ENCODE measurements at regions of chr7 and their contacts with region 1.

Region 1: GRCh38 chr7:1664711-1665548 is 5.1 kb upstream of the ELFN1 start:
- DNase-seq: no peak
- H3K4me3 ChIP-seq: peak overlapping the region; percentile 57
- H3K27ac ChIP-seq: no peak overlapping the region
- H3K27me3 ChIP-seq: peaks cover 48% of the 10 kb centered on the region
- CTCF ChIP-seq: peak; percentile 71

Region 2: DNA sequence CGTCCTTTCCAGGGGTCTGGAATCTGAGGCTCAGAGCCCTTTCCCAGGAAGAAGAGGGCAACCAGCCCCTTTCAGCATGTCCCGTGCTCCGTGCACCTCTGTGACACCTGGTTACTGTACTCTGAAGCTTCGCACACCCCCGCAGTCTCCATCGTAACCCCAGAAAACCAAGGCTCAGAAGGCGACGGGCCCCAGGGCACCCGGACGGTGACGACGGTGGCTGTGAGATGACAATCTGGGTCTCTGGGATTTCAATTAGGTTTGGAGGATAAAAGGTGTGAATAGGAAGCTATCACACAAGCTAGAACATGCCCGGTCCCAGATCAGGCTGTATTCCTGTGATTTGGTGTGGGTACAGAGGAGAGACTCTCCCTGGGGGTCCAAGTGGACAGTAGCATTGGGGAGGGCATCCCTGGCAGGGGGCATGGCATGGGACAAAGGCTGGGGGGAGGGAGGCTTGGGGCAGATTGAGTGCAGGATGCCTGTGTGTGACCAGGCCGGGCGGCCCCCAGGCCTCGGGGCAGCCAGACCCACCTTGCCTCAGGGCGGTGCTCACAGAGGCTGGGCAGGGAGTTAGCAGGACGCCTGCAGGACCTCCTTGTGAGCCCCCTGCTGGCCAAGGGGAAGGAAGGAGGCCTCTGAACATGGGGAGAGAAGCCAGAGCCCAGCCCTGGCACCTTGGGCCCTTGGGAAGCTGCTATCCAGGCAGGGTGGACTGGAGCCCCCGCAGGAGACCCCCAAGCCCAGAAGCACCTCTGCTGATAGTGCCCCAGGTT is 71.7 kb before region 1 on chr7:
- CTCF ChIA-PET with region 1: interaction called, 10 read pairs
- POLR2A ChIA-PET with region 1: no interaction called
- DNase-seq: no peak
- H3K4me3 ChIP-seq: no peak overlapping the region
- H3K27ac ChIP-seq: no peak overlapping the region
- H3K27me3 ChIP-seq: peaks cover 58% of the 10 kb centered on the region
- CTCF ChIP-seq: peak; percentile 48

Region 3: GRCh38 chr7:1691096-1691495 is 26.2 kb after region 1 on chr7:
- CTCF ChIA-PET with region 1: no interaction called
- POLR2A ChIA-PET with region 1: no interaction called
- DNase-seq: no peak
- H3K4me3 ChIP-seq: no peak overlapping the region
- H3K27ac ChIP-seq: no peak overlapping the region
- H3K27me3 ChIP-seq: peaks cover 32% of the 10 kb centered on the region
- CTCF ChIP-seq: no peak